ENCODE measurements at regions of chr14 and their contacts with region 1.

Region 1: DNA sequence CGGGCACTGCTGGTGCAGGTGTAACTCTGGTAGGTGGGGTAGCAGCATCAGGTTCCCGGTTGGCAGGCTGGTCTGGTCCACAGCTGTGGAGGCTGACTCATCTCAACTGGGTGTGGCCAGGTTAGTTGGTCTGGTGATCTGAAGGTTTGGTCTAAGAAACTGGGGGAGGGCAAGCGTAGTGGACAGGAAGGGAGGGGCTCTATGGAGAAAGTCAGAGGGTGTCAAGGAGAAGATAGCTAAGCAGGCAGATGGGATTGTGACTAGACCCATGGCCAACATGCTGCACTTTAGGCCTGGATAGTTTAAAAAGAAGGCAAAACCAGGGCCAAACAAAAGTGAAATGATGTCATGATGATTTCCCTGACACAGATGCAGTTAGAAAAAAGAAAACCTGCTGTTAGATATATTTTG is 7.9 kb downstream of the TRIM9 start:
- H3K4me3 ChIP-seq: no peak overlapping the region
- H3K27ac ChIP-seq: no peak overlapping the region
- H3K4me1 ChIP-seq: peaks cover 44% of the 10 kb centered on the region
- CTCF ChIP-seq: no peak

Region 2: GRCh38 chr14:50882953-50883826 is 203.8 kb before region 1 on chr14:
- CTCF ChIA-PET with region 1: no interaction called
- POLR2A ChIA-PET with region 1: interaction called, 10 read pairs
- H3K4me3 ChIP-seq: no peak overlapping the region
- H3K27ac ChIP-seq: no peak overlapping the region
- H3K4me1 ChIP-seq: no peaks in the 10 kb centered on the region
- CTCF ChIP-seq: no peak

Measured in HEK293 (cell line).